CD8-positive, alpha-beta T cell (primary cell): ENCODE measurements at regions of chrX and their contacts with region 1.

Region 1: DNA sequence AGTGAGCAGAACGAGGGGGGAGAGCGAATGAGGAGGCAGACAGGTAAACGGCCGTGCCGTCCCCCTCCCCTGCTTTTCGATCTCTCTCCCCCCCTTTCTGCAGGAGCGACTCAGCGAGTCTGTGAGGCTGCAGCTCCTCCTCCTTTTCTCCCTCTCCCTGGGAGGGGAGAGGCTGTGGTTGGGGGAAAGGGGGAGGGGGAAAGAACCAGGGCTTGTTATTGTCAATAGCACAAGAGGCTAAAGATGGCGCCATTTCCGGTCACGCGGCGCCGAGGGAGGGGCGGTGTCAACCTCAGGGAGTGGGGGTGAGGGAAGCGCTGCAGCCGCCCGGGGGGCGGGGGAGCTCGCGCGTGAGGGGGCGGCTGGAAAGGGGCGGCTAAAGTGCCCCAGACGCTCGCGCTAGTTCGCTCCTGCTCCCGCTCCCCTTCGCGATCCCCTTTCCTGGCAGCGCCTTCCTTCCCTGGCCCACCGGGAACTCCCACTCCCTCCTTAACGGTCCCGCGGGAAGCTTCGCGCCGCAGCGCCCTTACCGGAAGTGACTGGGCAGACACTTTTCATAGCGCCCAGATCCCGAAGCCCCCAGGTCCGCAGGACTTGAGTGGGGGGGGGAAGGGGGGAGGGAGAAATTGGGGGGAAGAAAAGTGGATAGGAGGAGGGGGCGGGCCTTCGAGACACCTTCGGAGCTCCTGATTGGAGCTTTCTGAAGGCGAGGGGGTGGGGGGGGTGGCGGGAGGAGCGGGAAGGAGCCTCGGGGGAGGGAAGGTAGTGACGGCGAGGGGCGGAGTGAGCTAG is at the start of gene CUL4B:
- DNase-seq: peak; percentile 80 to 96 (median 92)
- ATAC-seq: peak; percentile 89
- H3K4me3 ChIP-seq: peak within 1 kb of the TSS; percentile 66 to 86
- H3K4me3 Mint-ChIP-seq: peak within 1 kb of the TSS; percentile 98
- H3K27ac ChIP-seq: peak within 1 kb of the TSS; percentile 81 to 99
- H3K27ac Mint-ChIP-seq: peak within 1 kb of the TSS; percentile 98
- H3K4me1 ChIP-seq: peaks cover 25% of the 10 kb centered on the region
- H3K4me1 Mint-ChIP-seq: peaks cover 29% of the 10 kb centered on the region
- H3K27me3 ChIP-seq: no peaks in the 10 kb centered on the region
- H3K27me3 Mint-ChIP-seq: no peaks in the 10 kb centered on the region
- CTCF ChIP-seq: no peak
- total RNA-seq, gene CUL4B: 25.3 to 30.0 TPM

Region 2: DNA sequence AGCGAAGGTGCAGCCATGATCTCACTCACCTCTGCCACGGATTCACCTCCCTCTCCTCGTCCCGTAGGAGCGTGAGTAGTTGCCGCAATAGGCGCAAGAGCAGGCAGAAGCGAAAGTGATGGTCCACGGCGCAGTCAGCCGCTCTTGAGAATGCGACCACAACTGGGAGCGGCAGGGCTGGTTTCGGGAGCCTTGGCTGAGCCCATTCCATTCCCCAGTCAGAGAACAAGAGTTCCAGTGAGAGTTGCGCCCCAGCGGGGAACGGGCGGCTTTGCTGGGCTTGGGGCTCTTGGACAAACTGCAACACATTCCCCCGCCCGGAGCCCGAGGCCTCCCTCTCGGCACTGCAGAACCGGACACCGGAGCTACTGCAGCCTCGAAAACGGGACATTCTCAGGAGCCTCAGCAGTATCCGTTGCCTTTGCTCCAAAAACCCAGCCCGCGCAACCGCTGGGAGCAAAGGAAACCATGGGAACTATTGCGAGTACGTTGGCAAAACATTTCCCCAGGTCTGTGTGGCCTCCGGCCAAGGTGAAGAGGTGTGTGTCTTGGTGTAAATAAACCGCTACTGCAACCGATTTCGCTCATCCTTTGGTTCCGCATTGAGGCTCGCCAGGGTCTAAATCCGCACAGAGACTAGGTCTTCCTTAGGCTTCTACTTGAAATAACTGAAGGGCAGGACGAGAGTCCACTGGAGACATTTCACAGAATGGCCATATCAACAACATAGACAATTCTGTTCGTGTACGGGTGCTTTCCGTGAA is 316.1 kb before region 1 on chrX:
- CTCF ChIA-PET with region 1: no interaction called
- POLR2A ChIA-PET with region 1: no interaction called
- intact Hi-C with region 1: loop called (anchors 2 to 10 kb)
- DNase-seq: peak; percentile 28 to 77 (median 59)
- ATAC-seq: peak; percentile 88
- H3K4me3 ChIP-seq: peak overlapping the region; percentile 87 to 90
- H3K4me3 Mint-ChIP-seq: peak overlapping the region; percentile 98
- H3K27ac ChIP-seq: peak overlapping the region; percentile 73 to 90
- H3K27ac Mint-ChIP-seq: peak overlapping the region; percentile 93
- H3K4me1 ChIP-seq: peaks cover 15% of the 10 kb centered on the region
- H3K4me1 Mint-ChIP-seq: peaks cover 26% of the 10 kb centered on the region
- H3K27me3 ChIP-seq: no peaks in the 10 kb centered on the region
- H3K27me3 Mint-ChIP-seq: peaks cover 2% of the 10 kb centered on the region
- CTCF ChIP-seq: no peak

Region 3: DNA sequence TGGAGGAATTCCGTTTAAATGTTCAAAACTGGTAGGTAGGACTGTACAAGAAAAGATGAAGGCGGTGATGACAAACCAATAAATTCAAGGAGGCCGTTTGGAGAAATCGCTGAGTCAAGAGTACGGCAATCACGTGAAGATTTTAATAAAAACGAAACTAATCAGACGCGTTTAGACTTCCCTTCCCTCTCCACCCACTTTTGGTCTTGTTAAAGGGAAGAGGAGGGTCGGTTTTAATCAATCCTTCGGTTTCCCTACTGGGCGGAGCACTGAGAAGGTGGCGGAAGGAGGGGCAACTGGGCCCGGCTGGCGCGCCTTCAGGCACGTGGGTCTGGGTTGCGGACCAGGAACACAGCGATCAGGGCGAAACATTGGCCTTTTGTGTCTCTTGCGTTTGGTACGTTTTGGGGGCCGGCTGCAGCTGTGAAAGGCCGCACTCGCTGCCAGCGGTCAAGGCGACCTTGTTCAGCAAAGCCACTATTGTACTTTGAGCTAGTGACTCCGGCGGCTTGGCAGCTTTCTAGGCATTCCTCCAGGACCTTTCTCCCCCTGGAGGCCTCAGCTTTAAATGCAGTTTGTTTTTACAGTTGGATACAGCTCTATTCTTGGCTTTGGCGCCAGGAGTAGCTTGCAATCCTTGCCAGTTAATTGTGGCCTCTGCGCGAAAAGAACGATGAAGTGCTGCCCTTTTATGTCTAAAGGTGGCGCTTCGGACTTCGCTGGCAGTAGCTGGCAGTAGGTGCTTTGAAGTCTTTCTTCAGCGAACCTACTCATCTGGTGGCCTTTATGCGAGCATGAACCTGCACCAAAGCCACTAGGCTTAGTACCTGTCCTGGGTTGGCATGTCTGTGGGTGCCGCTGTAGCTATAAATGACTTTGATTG is 75.2 kb before region 1 on chrX:
- CTCF ChIA-PET with region 1: no interaction called
- POLR2A ChIA-PET with region 1: interaction called, 4 read pairs
- intact Hi-C with region 1: loop called in 1 of 2 experiments (anchors 2 kb)
- DNase-seq: peak in 8 of 9 experiments; percentile 8 to 77 (median 44)
- ATAC-seq: peak; percentile 76
- H3K4me3 ChIP-seq: peak overlapping the region; percentile 71 to 75
- H3K4me3 Mint-ChIP-seq: peak overlapping the region; percentile 92
- H3K27ac ChIP-seq: peak overlapping the region; percentile 68 to 89
- H3K27ac Mint-ChIP-seq: peak overlapping the region; percentile 94
- H3K4me1 ChIP-seq: peaks cover 25% of the 10 kb centered on the region
- H3K4me1 Mint-ChIP-seq: peaks cover 26% of the 10 kb centered on the region
- H3K27me3 ChIP-seq: no peaks in the 10 kb centered on the region
- H3K27me3 Mint-ChIP-seq: no peaks in the 10 kb centered on the region
- CTCF ChIP-seq: peak; percentile 50

Region 4: DNA sequence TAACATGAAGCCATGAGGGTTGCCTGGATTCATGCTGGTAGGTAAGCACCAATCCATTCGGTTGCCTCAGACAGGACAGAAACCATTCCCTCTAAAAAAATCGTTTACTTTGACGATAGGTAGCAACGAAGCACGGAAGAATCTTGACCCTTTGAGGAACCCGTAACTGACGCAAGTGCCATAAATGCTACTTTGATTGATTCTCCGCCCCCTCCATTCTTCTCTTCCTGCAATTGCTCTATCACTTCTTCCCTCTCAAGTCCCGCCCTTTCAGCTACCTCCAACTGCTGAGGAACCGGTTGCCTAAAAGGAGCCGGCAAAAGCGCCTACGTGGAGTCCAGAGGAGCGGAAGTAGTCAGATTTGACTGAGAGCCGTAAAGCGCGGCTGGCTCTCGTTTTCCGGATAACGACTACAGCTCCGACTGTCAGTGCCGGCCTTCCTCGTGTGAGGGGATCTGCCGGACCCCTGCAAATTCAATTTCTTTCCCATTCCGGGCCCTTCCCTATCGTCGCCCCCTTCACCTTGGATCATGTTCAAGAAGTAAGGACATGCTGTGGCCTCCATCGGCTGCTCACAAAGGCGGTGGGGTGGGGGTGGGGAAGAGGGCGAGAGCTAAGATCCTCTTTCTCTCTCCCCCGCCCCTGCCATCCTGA is 42.8 kb after region 1 on chrX and contains the start of gene MCTS1:
- CTCF ChIA-PET with region 1: interaction called, 5 read pairs
- POLR2A ChIA-PET with region 1: interaction called, 72 read pairs
- intact Hi-C with region 1: loop called (anchors 1 kb)
- DNase-seq: peak; percentile 52 to 93 (median 71)
- ATAC-seq: peak; percentile 87
- H3K4me3 ChIP-seq: peak within 1 kb of the TSS; percentile 76 to 91
- H3K4me3 Mint-ChIP-seq: peak within 1 kb of the TSS; percentile 95
- H3K27ac ChIP-seq: peak within 1 kb of the TSS; percentile 87 to 92
- H3K27ac Mint-ChIP-seq: peak within 1 kb of the TSS; percentile 97
- H3K4me1 ChIP-seq: peaks cover 15% of the 10 kb centered on the region
- H3K4me1 Mint-ChIP-seq: peaks cover 15% of the 10 kb centered on the region
- H3K27me3 ChIP-seq: no peaks in the 10 kb centered on the region
- H3K27me3 Mint-ChIP-seq: no peaks in the 10 kb centered on the region
- CTCF ChIP-seq: no peak
- total RNA-seq, gene MCTS1: 7.0 to 9.2 TPM